Activated naive CD4-positive, alpha-beta T cell treated with anti-CD3 and anti-CD28 coated beads for 36 hours (primary cell): ENCODE measurements at regions of chr6 and their contacts with region 1.

Region 1: GRCh38 chr6:142692942-142693341 is 252.0 kb downstream of the HIVEP2 start:
- DNase-seq: peak; percentile 81
- H3K4me3 Mint-ChIP-seq: no peak overlapping the region
- H3K27ac Mint-ChIP-seq: peak overlapping the region; percentile 63
- H3K4me1 Mint-ChIP-seq: peaks cover 22% of the 10 kb centered on the region
- H3K27me3 Mint-ChIP-seq: no peaks in the 10 kb centered on the region

Region 2: DNA sequence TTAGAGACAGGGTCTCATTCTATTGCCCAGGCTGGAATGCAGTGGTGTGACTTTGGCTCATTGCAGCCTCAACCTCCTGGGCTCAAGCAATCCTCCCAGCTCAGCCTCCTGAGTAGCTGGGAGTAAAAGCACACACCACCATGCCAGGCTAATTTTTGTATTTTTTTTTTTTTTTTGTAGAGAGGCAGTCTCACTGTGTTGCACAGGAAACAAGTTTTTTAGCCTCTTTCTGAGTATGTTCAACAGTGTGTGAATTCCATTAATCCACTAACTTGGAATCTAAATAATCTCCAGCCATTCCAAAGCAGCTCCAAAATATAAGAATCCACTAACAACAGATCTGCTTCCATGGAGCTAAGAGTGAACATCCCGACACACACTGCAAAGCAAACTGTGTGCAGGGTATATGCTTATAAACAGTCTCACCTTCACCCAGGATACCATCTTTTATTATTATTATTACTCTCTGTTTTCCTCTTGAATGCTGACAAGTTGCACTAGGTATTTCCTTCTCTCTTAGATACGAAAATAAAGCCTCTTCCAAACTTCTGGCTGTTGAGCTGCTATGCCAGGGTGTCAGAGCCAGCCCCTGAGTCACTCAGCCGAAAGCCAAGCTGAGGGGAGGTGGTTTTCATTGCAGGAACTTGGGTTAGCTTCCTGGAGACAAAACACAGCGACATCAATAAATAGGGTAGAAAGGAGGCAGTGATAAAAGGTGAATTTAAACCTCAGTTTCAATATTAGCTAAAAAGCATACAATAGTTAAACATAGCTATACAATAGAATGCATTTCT is 12.8 kb before region 1 on chr6:
- CTCF ChIA-PET with region 1: interaction called, 11 read pairs
- intact Hi-C with region 1: no loop called
- DNase-seq: peak; percentile 71
- H3K4me3 Mint-ChIP-seq: no peak overlapping the region
- H3K27ac Mint-ChIP-seq: peak overlapping the region; percentile 10
- H3K4me1 Mint-ChIP-seq: peaks cover 36% of the 10 kb centered on the region
- H3K27me3 Mint-ChIP-seq: no peaks in the 10 kb centered on the region

Region 3: DNA sequence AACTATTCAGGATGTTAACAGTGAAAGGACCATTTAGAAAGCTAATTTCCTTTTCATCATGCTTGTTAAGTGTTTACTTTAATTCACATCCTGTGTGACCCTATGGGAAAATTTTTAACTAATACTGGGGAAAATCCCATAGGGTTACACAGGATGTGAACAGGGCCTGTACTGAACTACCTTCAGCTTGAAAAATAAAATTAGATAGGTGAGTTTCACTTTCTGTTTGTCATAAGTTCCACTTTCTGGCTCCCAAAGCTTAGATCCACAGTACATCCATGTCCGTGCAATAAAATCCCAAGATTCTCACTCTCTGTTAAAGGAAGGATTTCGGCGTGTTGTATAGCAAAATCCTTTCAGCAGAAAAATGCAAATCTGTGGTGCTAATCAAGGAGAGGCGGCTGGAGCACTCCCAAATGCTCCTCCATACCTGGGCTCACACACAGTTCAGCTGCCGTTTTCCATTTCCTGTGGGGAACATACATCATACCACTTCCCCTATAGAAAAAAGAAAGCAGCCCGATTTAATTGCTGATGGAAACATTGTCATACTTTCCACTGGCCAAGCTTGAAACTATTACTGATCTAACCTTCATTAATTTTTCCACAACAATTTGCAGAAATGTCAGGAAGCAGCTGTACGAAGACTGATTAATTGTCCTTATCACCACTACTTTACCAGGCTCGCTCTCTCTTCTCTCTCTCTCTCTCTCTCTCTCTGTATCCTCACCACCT is 126.8 kb after region 1 on chr6:
- CTCF ChIA-PET with region 1: interaction called, 11 read pairs
- intact Hi-C with region 1: loop called (anchors 1 kb)
- DNase-seq: peak; percentile 65
- H3K4me3 Mint-ChIP-seq: peak overlapping the region; percentile 79
- H3K27ac Mint-ChIP-seq: peak overlapping the region; percentile 94
- H3K4me1 Mint-ChIP-seq: peaks cover 83% of the 10 kb centered on the region
- H3K27me3 Mint-ChIP-seq: no peaks in the 10 kb centered on the region

Region 4: GRCh38 chr6:142952614-142953013 is 259.7 kb after region 1 on chr6:
- CTCF ChIA-PET with region 1: interaction called, 3 read pairs
- intact Hi-C with region 1: loop called (anchors 1 kb)
- DNase-seq: peak; percentile 42
- H3K4me3 Mint-ChIP-seq: no peak overlapping the region
- H3K27ac Mint-ChIP-seq: peak overlapping the region; percentile 20
- H3K4me1 Mint-ChIP-seq: peaks cover 25% of the 10 kb centered on the region
- H3K27me3 Mint-ChIP-seq: no peaks in the 10 kb centered on the region

Region 5: DNA sequence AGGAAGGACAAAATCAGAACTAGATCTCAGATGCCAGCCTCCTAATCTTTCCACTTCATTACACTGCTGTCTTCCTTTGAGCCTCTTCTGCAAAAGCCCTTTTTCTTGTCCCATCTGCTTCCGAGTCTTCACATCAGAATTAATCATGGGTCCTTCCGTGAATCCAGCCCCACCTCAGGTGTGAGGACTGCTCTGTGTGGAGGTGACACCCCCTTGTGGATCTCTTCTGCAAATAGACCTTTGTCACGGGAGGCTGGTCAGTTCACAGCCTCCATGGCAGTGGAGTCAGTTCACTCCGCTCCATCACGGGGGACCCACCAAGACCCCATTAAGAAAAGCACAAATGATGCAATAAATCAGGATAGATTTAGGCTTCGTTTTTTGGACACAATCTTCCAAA is 586.4 kb after region 1 on chr6:
- CTCF ChIA-PET with region 1: interaction called, 7 read pairs
- intact Hi-C with region 1: loop called (anchors 1 kb)
- DNase-seq: peak; percentile 19
- H3K4me3 Mint-ChIP-seq: no peak overlapping the region
- H3K27ac Mint-ChIP-seq: no peak overlapping the region
- H3K4me1 Mint-ChIP-seq: peaks cover 1% of the 10 kb centered on the region
- H3K27me3 Mint-ChIP-seq: no peaks in the 10 kb centered on the region

Region 6: GRCh38 chr6:143427109-143427817 is 734.3 kb after region 1 on chr6:
- CTCF ChIA-PET with region 1: interaction called, 5 read pairs
- intact Hi-C with region 1: loop called (anchors 1 kb)
- DNase-seq: peak; percentile 76
- H3K4me3 Mint-ChIP-seq: no peak overlapping the region
- H3K27ac Mint-ChIP-seq: no peak overlapping the region
- H3K4me1 Mint-ChIP-seq: peaks cover 14% of the 10 kb centered on the region
- H3K27me3 Mint-ChIP-seq: no peaks in the 10 kb centered on the region

Region 7: GRCh38 chr6:144013486-144013909 is 1320.6 kb after region 1 on chr6:
- CTCF ChIA-PET with region 1: no interaction called
- intact Hi-C with region 1: loop called (anchors 10 kb)
- DNase-seq: peak; percentile 78
- H3K4me3 Mint-ChIP-seq: no peak overlapping the region
- H3K27ac Mint-ChIP-seq: no peak overlapping the region
- H3K4me1 Mint-ChIP-seq: peaks cover 2% of the 10 kb centered on the region
- H3K27me3 Mint-ChIP-seq: peaks cover 10% of the 10 kb centered on the region